ENCODE measurements at regions of chr3 and their contacts with region 1.

Region 1: GRCh38 chr3:129249276-129250065 is at the start of gene COPG1:
- DNase-seq: peak; percentile 73 to 92
- H3K4me3 ChIP-seq: peak within 1 kb of the TSS; percentile 88
- H3K27ac ChIP-seq: peak within 1 kb of the TSS; percentile 56
- H3K4me1 ChIP-seq: peaks cover 21% of the 10 kb centered on the region
- H3K27me3 ChIP-seq: no peaks in the 10 kb centered on the region
- CTCF ChIP-seq: no peak
- total RNA-seq, gene COPG1: 195 and 212 TPM in 2 replicates

Region 2: GRCh38 chr3:129052675-129053074 is 196.8 kb before region 1 on chr3:
- CTCF ChIA-PET with region 1: interaction called, 9 read pairs
- POLR2A ChIA-PET with region 1: interaction called, 25 read pairs
- intact Hi-C with region 1: loop called (anchors 1 kb)
- DNase-seq: no peak
- H3K4me3 ChIP-seq: no peak overlapping the region
- H3K27ac ChIP-seq: no peak overlapping the region
- H3K4me1 ChIP-seq: no peaks in the 10 kb centered on the region; the same call in 1 of the 2 replicates
- H3K27me3 ChIP-seq: peaks cover 9% of the 10 kb centered on the region
- CTCF ChIP-seq: no peak

Region 3: GRCh38 chr3:129120254-129121004 is 129.0 kb before region 1 on chr3:
- CTCF ChIA-PET with region 1: interaction called, 5 read pairs
- POLR2A ChIA-PET with region 1: no interaction called
- intact Hi-C with region 1: loop called (anchors 2 kb)
- DNase-seq: peak; percentile 91 to 92
- H3K4me3 ChIP-seq: peak overlapping the region; percentile 70
- H3K27ac ChIP-seq: peak overlapping the region; percentile 90
- H3K4me1 ChIP-seq: peaks cover 17% of the 10 kb centered on the region
- H3K27me3 ChIP-seq: no peaks in the 10 kb centered on the region
- CTCF ChIP-seq: no peak

Region 4: GRCh38 chr3:129183569-129184395 is 65.7 kb before region 1 on chr3 and contains the start of gene CNBP:
- CTCF ChIA-PET with region 1: interaction called, 6 read pairs
- POLR2A ChIA-PET with region 1: interaction called, 9 read pairs
- intact Hi-C with region 1: loop called (anchors 1 kb)
- DNase-seq: peak; percentile 84 to 94
- H3K4me3 ChIP-seq: peak within 1 kb of the TSS; percentile 73
- H3K27ac ChIP-seq: peak within 1 kb of the TSS; percentile 79
- H3K4me1 ChIP-seq: peaks cover 45% of the 10 kb centered on the region
- H3K27me3 ChIP-seq: no peaks in the 10 kb centered on the region
- CTCF ChIP-seq: no peak
- total RNA-seq, gene CNBP: 261 and 265 TPM in 2 replicates

Region 5: DNA sequence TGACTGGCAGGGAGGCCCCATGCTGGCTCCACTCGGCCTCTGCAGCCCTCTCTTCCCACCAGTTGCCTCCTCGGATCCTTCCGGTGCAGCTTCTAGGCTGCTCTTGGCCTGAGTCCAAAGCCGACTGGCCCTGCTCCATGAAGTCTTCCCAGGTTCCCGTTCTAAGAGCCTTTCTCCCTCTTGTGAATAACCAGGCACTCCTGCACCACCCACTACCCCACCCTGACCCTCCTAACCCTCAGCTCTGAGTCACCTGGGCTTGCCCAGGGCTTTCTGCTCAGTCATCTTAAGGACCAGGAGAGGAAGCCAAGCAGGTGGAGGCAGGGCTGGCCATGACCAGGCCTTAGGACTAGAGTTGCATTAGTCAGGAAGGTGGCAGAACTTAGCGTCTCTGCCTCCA is 37.7 kb before region 1 on chr3:
- CTCF ChIA-PET with region 1: interaction called, 3 read pairs
- POLR2A ChIA-PET with region 1: no interaction called
- intact Hi-C with region 1: loop called (anchors 2 kb)
- DNase-seq: peak; percentile 98
- H3K4me3 ChIP-seq: no peak overlapping the region
- H3K27ac ChIP-seq: peak overlapping the region; percentile 75
- H3K4me1 ChIP-seq: peaks cover 21% of the 10 kb centered on the region
- H3K27me3 ChIP-seq: no peaks in the 10 kb centered on the region
- CTCF ChIP-seq: no peak

Region 6: DNA sequence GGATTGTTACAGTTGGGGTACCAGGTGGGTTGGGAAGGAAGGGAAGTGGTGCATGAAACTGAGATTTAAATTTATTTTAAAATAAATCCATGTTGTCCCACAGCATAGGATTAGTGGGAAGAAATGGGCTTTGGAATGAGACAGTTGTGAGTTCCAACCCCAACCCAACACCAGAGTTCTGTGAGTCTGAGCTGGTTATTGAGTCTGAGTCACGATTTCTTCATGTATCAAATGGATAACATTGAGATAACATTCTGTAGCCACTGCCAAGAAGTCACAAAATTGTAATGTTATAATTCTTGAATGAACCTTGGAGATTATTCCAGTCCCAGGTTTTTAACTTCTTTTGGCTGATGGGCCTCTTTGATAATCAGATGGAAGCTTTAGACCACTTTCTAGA is 204.3 kb after region 1 on chr3:
- CTCF ChIA-PET with region 1: no interaction called
- POLR2A ChIA-PET with region 1: no interaction called
- intact Hi-C with region 1: no loop called
- DNase-seq: no peak
- H3K4me3 ChIP-seq: no peak overlapping the region
- H3K27ac ChIP-seq: no peak overlapping the region
- H3K4me1 ChIP-seq: no peaks in the 10 kb centered on the region
- H3K27me3 ChIP-seq: no peaks in the 10 kb centered on the region
- CTCF ChIP-seq: no peak